ENCODE measurements at regions of chr1 and their contacts with region 1.

Region 1: GRCh38 chr1:53485478-53486394 is 26.5 kb downstream of the DMRTB1 start:
- DNase-seq: peak; percentile 72
- H3K4me3 ChIP-seq: no peak overlapping the region
- H3K27ac ChIP-seq: no peak overlapping the region
- H3K4me1 ChIP-seq: no peaks in the 10 kb centered on the region
- H3K27me3 ChIP-seq: peaks cover 52% of the 10 kb centered on the region
- CTCF ChIP-seq: peak; percentile 73 to 81 (median 79)
- EP300 ChIP-seq: no peak
- POLR2A ChIP-seq: no peak

Region 2: GRCh38 chr1:52423771-52424170 is 1062.0 kb before region 1 on chr1:
- in situ Hi-C with region 1: no loop called
- intact Hi-C with region 1: no loop called
- DNase-seq: no peak
- H3K4me3 ChIP-seq: no peak overlapping the region
- H3K27ac ChIP-seq: peak overlapping the region in 1 of 4 donors; percentile 21
- H3K4me1 ChIP-seq: peaks cover 0 to 16% (median 0%) of the 10 kb centered on the region in 4 donors
- H3K27me3 ChIP-seq: no peaks in the 10 kb centered on the region
- CTCF ChIP-seq: no peak
- EP300 ChIP-seq: no peak
- POLR2A ChIP-seq: no peak

Region 3: GRCh38 chr1:53511933-53512806 is 26.4 kb after region 1 on chr1:
- in situ Hi-C with region 1: no loop called
- intact Hi-C with region 1: no loop called
- DNase-seq: no peak
- H3K4me3 ChIP-seq: no peak overlapping the region
- H3K27ac ChIP-seq: peak overlapping the region in 3 of 4 donors; percentile 9 to 77 (median 30)
- H3K4me1 ChIP-seq: peaks cover 0 to 10% (median 6%) of the 10 kb centered on the region in 4 donors
- H3K27me3 ChIP-seq: no peaks in the 10 kb centered on the region
- CTCF ChIP-seq: no peak
- EP300 ChIP-seq: no peak
- POLR2A ChIP-seq: no peak

Region 4: DNA sequence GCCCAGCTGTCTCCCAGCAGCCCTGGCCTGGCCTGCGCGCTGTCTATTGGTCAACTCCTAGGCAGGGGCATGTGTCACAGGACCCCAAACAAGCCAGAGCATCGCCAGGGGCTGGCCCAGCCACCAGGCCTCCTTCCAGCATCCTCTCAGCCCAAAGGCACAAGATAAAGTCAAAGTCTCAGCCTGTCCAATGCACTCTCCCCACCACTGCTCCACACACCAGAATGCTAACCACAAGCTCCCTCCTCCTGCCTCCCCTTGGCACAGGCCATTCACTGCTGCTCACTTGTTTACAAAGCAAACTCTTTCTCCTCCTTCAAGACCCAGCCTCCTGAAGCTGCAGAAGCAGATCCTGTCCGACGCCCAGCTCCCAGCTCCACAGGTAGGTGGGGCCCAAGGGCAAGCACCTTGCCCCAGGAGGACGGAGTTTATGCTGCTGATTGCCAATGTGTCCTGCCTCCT is 106.8 kb after region 1 on chr1:
- in situ Hi-C with region 1: no loop called
- intact Hi-C with region 1: loop called (anchors 5 kb)
- DNase-seq: peak; percentile 21
- H3K4me3 ChIP-seq: no peak overlapping the region
- H3K27ac ChIP-seq: no peak overlapping the region
- H3K4me1 ChIP-seq: no peaks in the 10 kb centered on the region
- H3K27me3 ChIP-seq: no peaks in the 10 kb centered on the region
- CTCF ChIP-seq: peak in 1 of 5 experiments; percentile 4
- EP300 ChIP-seq: no peak
- POLR2A ChIP-seq: no peak

Region 5: DNA sequence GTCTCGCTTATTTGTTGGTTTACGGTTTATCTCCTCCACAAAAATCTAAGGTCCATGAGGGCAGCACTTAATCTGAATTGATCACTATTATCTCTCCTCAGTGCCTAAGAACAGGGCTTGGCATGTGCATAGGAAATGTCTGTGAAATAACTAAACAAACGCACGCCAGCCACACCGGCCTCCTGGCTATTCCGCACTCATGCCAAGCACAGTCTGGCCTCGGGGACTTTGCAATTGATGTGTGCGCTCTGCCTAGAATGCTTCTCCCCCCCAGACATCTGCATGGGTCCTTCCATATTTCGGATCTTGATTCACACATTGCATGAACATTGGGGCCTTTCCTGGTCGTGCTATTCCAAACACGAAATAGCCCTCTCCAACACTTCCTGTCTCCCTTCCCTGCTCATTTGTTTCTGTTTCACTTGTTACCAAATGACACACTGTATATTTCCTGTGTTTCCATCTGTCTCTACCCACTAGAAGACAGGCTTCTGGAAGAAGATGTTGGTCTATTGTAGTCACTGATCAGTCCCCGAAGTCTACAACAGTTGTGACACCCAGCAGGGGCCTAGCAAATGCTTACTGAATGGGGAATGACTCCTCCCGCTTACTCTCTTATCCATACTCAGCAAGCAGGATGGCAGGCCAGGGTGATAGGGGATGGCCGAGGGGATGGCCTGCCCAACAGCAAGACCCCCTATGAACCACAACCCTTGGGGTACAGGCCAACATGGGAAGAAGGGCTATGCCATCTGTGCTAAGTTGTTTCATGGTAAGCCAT is 159.4 kb after region 1 on chr1:
- in situ Hi-C with region 1: no loop called
- intact Hi-C with region 1: no loop called
- DNase-seq: no peak
- H3K4me3 ChIP-seq: no peak overlapping the region
- H3K27ac ChIP-seq: no peak overlapping the region
- H3K4me1 ChIP-seq: no peaks in the 10 kb centered on the region
- H3K27me3 ChIP-seq: no peaks in the 10 kb centered on the region
- CTCF ChIP-seq: no peak
- EP300 ChIP-seq: no peak
- POLR2A ChIP-seq: no peak

Region 6: GRCh38 chr1:53681977-53682685 is 196.4 kb after region 1 on chr1:
- in situ Hi-C with region 1: loop called in 1 of 4 experiments (anchors 10 kb)
- intact Hi-C with region 1: no loop called
- DNase-seq: peak; percentile 72
- H3K4me3 ChIP-seq: no peak overlapping the region
- H3K27ac ChIP-seq: no peak overlapping the region
- H3K4me1 ChIP-seq: peaks cover 5 to 16% (median 9%) of the 10 kb centered on the region in 4 donors
- H3K27me3 ChIP-seq: peaks cover 33% of the 10 kb centered on the region
- CTCF ChIP-seq: peak; percentile 31 to 56 (median 43)
- EP300 ChIP-seq: no peak
- POLR2A ChIP-seq: no peak

Region 7: GRCh38 chr1:53754484-53755312 is 269.0 kb after region 1 on chr1:
- in situ Hi-C with region 1: loop called (anchors 5 to 25 kb)
- intact Hi-C with region 1: loop called (anchors 5 kb)
- DNase-seq: peak; percentile 32
- H3K4me3 ChIP-seq: no peak overlapping the region
- H3K27ac ChIP-seq: no peak overlapping the region
- H3K4me1 ChIP-seq: no peaks in the 10 kb centered on the region
- H3K27me3 ChIP-seq: no peaks in the 10 kb centered on the region
- CTCF ChIP-seq: peak; percentile 56 to 66 (median 61)
- EP300 ChIP-seq: no peak
- POLR2A ChIP-seq: no peak

Region 8: GRCh38 chr1:54081306-54082270 is 595.9 kb after region 1 on chr1:
- in situ Hi-C with region 1: no loop called
- intact Hi-C with region 1: no loop called
- DNase-seq: peak; percentile 84
- H3K4me3 ChIP-seq: no peak overlapping the region
- H3K27ac ChIP-seq: no peak overlapping the region
- H3K4me1 ChIP-seq: peaks cover 0 to 23% (median 3%) of the 10 kb centered on the region in 4 donors
- H3K27me3 ChIP-seq: no peaks in the 10 kb centered on the region
- CTCF ChIP-seq: peak; percentile 66 to 78 (median 77)
- EP300 ChIP-seq: no peak
- POLR2A ChIP-seq: no peak